Gastrocnemius medialis (tissue), 4 donors: ENCODE measurements at regions of chr1 and their contacts with region 1.

Region 1: GRCh38 chr1:173476664-173477285 is 360 bp upstream of the PRDX6 start:
- DNase-seq: peak; percentile 93 to 97
- ATAC-seq: peak; percentile 69 to 77
- H3K4me3 ChIP-seq: peak overlapping the region; percentile 78 to 94 (median 94)
- H3K27ac ChIP-seq: peak overlapping the region; percentile 95 to 100 (median 98)
- H3K4me1 ChIP-seq: peaks cover 52 to 55% of the 10 kb centered on the region in 2 donors
- H3K27me3 ChIP-seq: no peaks in the 10 kb centered on the region
- CTCF ChIP-seq: peak in 1 of 5 experiments; percentile 5
- POLR2A ChIP-seq: no peak

Region 2: DNA sequence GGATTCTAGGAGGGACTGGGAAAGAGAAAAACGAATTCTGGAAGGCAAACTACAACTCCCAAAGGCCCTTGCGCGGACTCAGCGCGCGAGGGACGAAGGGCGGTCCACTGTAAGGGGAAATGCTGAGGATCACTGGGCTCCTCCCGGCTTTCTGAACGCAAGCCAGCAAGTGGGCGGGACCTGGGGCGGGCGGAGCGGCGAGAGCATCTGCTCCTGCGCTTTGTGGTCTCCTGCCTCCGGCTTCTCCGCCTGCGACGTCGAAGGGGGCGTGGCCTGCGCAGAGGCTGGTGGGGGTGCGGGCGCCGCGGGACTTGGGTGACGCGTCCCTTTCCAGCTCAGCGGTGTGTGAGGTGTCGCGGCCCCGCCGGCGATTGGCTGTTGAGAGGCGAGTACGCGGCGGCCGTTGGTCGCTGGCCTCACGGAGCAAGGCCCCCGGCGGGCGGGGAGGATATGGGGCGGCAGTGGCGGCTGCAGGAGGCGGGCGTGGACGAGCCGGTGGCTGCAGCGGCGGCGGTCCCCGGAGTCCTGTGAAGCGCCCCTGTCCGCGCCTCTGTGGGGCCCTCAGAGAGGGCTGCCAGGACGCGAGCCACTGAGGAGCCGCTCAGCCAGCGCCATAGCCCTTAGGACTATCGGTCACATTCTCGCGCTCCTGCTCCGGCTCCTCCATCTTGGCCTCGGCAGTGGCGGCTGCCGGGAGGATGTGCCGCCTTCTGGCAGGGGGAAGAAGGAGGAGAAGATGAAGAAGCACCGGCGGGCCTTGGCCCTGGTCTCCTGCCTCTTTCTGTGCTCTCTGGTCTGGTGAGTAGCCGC is 943.9 kb before region 1 on chr1 and contains the start of gene SUCO:
- in situ Hi-C with region 1: no loop called
- intact Hi-C with region 1: loop called (anchors 2 kb)
- DNase-seq: peak; percentile 99 to 100
- ATAC-seq: peak; percentile 90 to 93
- H3K4me3 ChIP-seq: peak within 1 kb of the TSS; percentile 69 to 99 (median 96)
- H3K27ac ChIP-seq: peak within 1 kb of the TSS; percentile 94 to 100 (median 98)
- H3K4me1 ChIP-seq: peaks cover 19 to 28% of the 10 kb centered on the region in 2 donors
- H3K27me3 ChIP-seq: no peaks in the 10 kb centered on the region
- CTCF ChIP-seq: no peak
- POLR2A ChIP-seq: peak; percentile 92 to 93
- total RNA-seq, gene SUCO: 5.8 to 11.3 (median 6.4) TPM

Region 3: DNA sequence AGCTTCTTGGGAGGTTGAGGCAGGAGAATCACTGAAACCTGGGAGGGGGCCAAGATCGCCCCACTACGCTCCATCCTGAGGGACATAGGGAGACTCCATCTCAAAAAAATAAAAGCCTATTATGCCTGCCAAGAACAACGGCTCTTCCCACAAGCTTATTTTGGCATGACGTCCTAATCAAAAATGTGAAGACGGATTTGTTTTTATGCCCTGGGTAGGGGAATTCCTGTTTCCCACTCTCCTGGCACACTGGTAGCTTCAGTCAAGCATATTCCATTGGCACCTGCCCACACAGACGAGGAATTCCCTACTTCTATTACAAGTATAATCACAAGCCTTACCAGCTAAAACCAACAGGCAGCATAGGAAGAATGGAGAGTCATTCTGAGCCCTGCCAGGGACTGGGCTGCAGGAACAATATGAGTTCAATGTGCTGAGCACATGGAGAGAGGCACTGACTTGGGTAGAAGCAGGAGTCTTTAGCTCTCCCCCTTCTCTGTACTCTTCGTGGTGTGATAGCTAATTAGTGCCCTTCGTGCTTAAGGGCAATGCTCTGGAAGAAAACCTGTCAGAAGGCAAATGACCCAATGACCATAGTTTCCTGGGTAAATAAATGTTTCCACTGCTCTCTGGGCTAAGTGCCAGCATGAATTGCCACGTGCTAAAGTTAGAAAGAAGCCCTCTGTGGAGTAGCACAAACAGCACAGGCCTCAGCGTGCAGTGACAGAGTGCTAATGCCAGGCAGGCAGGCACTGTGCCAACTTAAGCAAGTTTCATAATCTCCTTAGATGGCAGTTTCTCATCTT is 286.5 kb before region 1 on chr1:
- in situ Hi-C with region 1: no loop called
- intact Hi-C with region 1: no loop called
- DNase-seq: peak; percentile 54 to 68
- ATAC-seq: peak; percentile 79 to 86
- H3K4me3 ChIP-seq: no peak overlapping the region
- H3K27ac ChIP-seq: peak overlapping the region; percentile 39 to 71 (median 47)
- H3K4me1 ChIP-seq: peaks cover 11 to 19% of the 10 kb centered on the region in 2 donors
- H3K27me3 ChIP-seq: no peaks in the 10 kb centered on the region
- CTCF ChIP-seq: no peak
- POLR2A ChIP-seq: no peak

Region 4: GRCh38 chr1:173285048-173285447 is 191.7 kb before region 1 on chr1:
- in situ Hi-C with region 1: no loop called
- intact Hi-C with region 1: no loop called
- DNase-seq: no peak
- ATAC-seq: no peak
- H3K4me3 ChIP-seq: no peak overlapping the region
- H3K27ac ChIP-seq: no peak overlapping the region
- H3K4me1 ChIP-seq: no peaks in the 10 kb centered on the region
- H3K27me3 ChIP-seq: no peaks in the 10 kb centered on the region
- CTCF ChIP-seq: no peak
- POLR2A ChIP-seq: no peak

Region 5: GRCh38 chr1:173429471-173430402 is 47.0 kb before region 1 on chr1:
- in situ Hi-C with region 1: no loop called
- intact Hi-C with region 1: loop called (anchors 1 kb)
- DNase-seq: peak; percentile 63 to 75
- ATAC-seq: peak; percentile 76 to 80
- H3K4me3 ChIP-seq: peak overlapping the region; percentile 10 to 46 (median 40)
- H3K27ac ChIP-seq: peak overlapping the region; percentile 76 to 83 (median 82)
- H3K4me1 ChIP-seq: peaks cover 28 to 29% of the 10 kb centered on the region in 2 donors
- H3K27me3 ChIP-seq: no peaks in the 10 kb centered on the region
- CTCF ChIP-seq: peak; percentile 9 to 72 (median 58)
- POLR2A ChIP-seq: peak; percentile 11 to 18

Region 6: DNA sequence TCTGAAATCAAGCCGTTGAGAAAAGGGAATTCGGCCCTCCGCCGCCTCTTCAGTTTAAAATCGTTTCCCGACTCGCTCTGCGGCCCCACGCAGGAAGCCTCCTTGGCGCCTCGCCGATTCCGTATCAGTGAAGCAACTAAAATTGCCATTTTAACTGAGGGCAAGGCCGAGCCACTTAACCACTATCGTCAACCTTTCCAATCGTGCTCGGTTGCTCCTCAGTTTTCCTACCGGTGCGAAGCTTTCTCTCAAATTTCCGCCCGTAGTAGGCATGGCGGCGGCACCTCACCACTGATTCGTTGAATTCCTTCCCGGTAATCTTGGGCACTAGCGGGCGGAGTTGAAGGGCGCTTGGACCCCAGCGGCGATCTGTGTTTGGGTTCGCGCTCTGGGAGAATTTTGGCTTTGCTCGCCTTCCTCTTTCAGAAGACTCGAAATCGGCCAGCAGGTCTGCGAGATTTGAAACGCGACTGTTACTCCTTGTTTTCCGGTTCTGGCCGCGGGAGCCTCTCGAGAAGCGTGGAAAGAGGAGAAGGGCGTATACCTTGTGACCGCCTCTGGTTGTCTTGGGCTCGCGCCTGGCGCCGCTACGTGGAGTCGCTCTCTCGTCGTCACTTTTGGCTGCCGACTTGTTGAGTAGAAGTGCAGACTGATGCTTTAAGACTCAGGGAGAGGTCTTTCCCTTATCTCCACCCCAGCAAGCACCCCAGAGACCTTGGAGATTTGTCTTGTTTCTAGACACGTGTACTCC is 347.7 kb after region 1 on chr1 and contains the starts of genes CENPL and DARS2:
- in situ Hi-C with region 1: no loop called
- intact Hi-C with region 1: loop called (anchors 1 kb)
- DNase-seq: peak; percentile 95 to 96
- ATAC-seq: peak; percentile 99
- H3K4me3 ChIP-seq: peak within 1 kb of the TSS; percentile 69 to 94 (median 76)
- H3K27ac ChIP-seq: peak within 1 kb of the TSS; percentile 95 to 99 (median 96)
- H3K4me1 ChIP-seq: peaks cover 13% of the 10 kb centered on the region in 2 donors
- H3K27me3 ChIP-seq: no peaks in the 10 kb centered on the region
- CTCF ChIP-seq: no peak
- POLR2A ChIP-seq: peak; percentile 31 to 62
- total RNA-seq, gene CENPL: 1.1 to 5.0 (median 3.4) TPM
- total RNA-seq, gene DARS2: 4.3 to 8.9 (median 8.2) TPM

Region 7: DNA sequence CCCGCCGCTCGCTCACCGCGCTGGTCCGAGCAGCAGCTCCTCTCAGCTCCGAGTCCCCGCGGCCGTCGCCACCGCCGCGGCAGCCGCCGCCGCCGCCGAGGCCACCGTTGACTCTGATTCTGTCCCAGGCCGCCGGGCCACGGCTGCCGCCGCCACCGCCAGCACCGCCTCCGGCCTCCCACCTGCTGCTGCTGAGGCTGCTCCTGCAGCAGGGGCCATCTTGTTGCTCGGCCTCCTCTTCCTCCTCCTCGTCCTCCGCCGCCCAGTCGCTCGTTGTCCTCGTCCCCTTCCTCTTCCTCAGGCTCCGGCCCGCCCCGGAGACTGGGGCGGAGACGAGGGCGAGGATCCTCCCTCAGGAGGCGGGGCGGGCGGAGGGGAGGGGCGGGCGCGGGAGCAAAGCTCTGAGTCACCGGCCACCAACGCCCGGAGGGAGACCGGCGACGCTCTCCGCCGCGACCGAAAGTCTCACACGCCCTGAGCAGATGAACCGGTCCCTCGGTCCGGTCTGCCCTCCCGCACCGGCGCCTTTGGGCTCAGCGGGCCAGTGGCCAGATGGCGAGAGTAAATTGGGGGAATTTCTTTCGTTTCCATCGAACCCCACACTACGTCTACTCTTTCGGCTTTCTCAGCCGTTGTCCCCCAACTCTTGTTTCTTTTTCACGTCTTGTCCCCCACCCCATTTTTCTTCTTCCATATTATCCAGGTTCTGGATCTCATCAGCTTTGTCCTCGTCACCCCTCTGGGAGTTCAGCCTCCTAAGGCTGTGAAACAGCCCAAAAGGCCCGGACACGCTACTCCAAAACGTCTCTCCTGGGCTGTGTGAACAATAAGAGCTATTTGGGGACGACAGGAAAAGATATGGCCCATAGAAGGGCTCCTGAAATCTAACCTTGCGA is 545.6 kb after region 1 on chr1 and contains the start of gene RC3H1:
- in situ Hi-C with region 1: no loop called
- intact Hi-C with region 1: loop called (anchors 5 kb)
- DNase-seq: peak; percentile 89 to 90
- ATAC-seq: peak; percentile 81 to 89
- H3K4me3 ChIP-seq: peak within 1 kb of the TSS; percentile 73 to 88 (median 82)
- H3K27ac ChIP-seq: peak within 1 kb of the TSS; percentile 94 to 98 (median 95)
- H3K4me1 ChIP-seq: peaks cover 29 to 44% of the 10 kb centered on the region in 2 donors
- H3K27me3 ChIP-seq: no peaks in the 10 kb centered on the region
- CTCF ChIP-seq: no peak
- POLR2A ChIP-seq: peak; percentile 91 to 94
- total RNA-seq, gene RC3H1: 17.6 to 88.9 (median 37.8) TPM

Region 8: GRCh38 chr1:174999216-174999925 is 1522.6 kb after region 1 on chr1:
- in situ Hi-C with region 1: no loop called
- intact Hi-C with region 1: loop called (anchors 2 kb)
- DNase-seq: peak; percentile 96 to 98
- ATAC-seq: peak; percentile 93 to 98
- H3K4me3 ChIP-seq: peak overlapping the region; percentile 72 to 83 (median 74)
- H3K27ac ChIP-seq: peak overlapping the region; percentile 94 to 97 (median 96)
- H3K4me1 ChIP-seq: peaks cover 17 to 24% of the 10 kb centered on the region in 2 donors
- H3K27me3 ChIP-seq: no peaks in the 10 kb centered on the region
- CTCF ChIP-seq: no peak
- POLR2A ChIP-seq: peak; percentile 86 to 91